ENCODE measurements at regions of chr17 and their contacts with region 1.

Region 1: GRCh38 chr17:35540589-35541404 is 3.3 kb upstream of the SLFN12L start:
- DNase-seq: no peak
- ATAC-seq: peak; percentile 71
- H3K4me3 ChIP-seq: peak overlapping the region; percentile 16 to 28
- H3K27ac ChIP-seq: peak overlapping the region; percentile 48; the same call in 1 of the 2 replicates
- H3K4me1 ChIP-seq: no peaks in the 10 kb centered on the region
- H3K27me3 ChIP-seq: no peaks in the 10 kb centered on the region
- CTCF ChIP-seq: no peak

Region 2: GRCh38 chr17:34207572-34207971 is 1333.2 kb before region 1 on chr17:
- CTCF ChIA-PET with region 1: interaction called, 10 read pairs
- POLR2A ChIA-PET with region 1: no interaction called
- in situ Hi-C with region 1: no loop called
- intact Hi-C with region 1: no loop called
- DNase-seq: no peak
- ATAC-seq: no peak
- H3K4me3 ChIP-seq: no peak overlapping the region
- H3K27ac ChIP-seq: peak overlapping the region; percentile 62
- H3K4me1 ChIP-seq: no peaks in the 10 kb centered on the region; the same call in 1 of the 2 replicates
- H3K27me3 ChIP-seq: no peaks in the 10 kb centered on the region
- CTCF ChIP-seq: no peak

Region 3: GRCh38 chr17:35189291-35189690 is 351.5 kb before region 1 on chr17:
- CTCF ChIA-PET with region 1: no interaction called
- POLR2A ChIA-PET with region 1: no interaction called
- in situ Hi-C with region 1: loop called (anchors 25 kb)
- intact Hi-C with region 1: no loop called
- DNase-seq: no peak
- ATAC-seq: no peak
- H3K4me3 ChIP-seq: no peak overlapping the region
- H3K27ac ChIP-seq: no peak overlapping the region
- H3K4me1 ChIP-seq: no peaks in the 10 kb centered on the region
- H3K27me3 ChIP-seq: no peaks in the 10 kb centered on the region
- CTCF ChIP-seq: no peak

Region 4: DNA sequence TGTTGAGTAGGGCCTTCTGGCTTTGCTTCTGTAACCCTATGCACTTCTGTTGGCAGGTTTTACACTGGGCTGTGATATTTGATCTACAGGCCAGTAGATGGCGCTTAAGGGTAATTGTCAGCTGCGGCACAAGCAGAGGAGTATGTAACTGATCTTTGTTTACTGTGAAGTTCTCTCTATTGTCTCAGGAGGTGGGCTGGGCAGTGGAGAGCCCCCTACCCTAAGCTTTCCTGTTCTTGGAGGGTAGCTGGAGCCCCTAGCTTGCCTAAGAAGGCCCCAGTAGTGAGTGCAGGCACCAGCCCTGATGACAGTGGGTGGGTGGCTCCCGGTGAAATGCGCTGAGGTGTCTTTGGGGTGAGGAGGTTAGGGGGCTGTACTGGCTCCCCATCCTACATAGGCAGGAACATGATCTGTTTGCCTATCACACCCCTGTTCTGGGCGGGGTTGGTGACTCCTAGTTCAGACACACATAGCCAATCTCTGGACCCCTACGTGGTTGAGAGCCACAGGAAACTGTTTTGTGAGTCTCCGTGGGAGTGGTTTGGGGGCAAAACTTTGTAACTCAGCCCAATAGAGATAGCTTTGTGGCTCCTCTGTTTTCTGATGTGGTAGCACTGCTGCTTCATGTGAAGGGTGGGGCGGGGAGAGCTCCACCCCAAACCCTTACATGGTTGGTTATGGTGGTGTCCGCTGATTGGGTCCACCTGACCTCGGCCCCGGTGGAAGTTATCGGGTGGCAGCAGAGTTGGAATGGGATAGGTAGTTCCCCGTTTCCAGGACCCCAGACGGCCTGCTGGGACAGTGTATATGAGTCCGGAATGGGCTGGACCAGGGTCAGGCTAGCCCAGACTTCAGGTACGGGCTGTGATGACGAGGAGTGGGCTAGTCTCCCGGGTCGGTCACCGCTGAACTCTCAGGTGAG is 227.7 kb before region 1 on chr17:
- CTCF ChIA-PET with region 1: interaction called, 12 read pairs
- POLR2A ChIA-PET with region 1: no interaction called
- in situ Hi-C with region 1: loop called (anchors 25 kb)
- intact Hi-C with region 1: no loop called
- DNase-seq: peak; percentile 32
- ATAC-seq: peak; percentile 98
- H3K4me3 ChIP-seq: no peak overlapping the region
- H3K27ac ChIP-seq: no peak overlapping the region
- H3K4me1 ChIP-seq: no peaks in the 10 kb centered on the region
- H3K27me3 ChIP-seq: no peaks in the 10 kb centered on the region; the same call in 1 of the 2 replicates
- CTCF ChIP-seq: peak; percentile 84

Region 5: DNA sequence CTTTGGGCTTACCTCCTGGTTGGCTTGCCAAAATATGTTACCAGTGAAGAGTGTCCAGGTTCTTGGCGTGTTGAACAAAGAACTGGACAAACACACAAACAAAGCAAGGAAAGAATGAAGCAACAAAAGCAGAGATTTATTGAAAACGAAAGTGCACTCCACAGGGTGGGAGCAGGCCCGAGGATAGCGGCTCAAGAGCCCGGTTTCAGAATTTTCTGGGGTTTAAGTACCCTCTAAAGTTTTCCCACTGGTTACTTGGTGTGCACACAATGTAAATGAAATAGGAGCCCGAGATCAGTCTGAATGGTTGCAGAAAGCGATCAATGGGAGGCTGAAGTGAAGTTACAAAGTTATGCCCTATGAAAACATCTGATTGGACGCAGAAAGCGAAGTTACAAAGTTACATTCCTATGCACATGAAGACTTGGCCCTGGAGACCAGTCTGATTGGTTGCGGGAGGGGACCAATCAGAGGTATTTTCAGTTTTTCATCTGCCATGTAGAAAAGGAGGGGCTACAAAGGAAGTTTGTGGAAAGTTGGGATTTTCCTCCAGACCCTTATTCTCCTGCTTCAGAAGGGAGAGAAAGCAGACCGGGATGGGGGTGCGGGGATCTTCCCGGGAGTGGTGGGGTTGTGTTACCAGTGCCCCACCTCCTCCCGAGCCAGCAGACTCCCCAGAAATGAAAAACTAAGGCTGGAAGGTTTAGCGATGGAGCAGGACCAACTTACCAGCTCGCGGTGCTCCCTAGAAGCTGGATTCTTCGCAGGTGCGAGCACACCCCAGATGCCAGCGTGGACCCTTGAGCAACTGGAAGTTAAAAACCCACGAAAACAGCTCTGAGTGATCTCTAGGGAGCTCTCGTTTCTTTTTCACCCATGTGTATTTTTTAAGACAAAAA is 108.4 kb before region 1 on chr17 and contains the start of gene SLFN12:
- CTCF ChIA-PET with region 1: no interaction called
- POLR2A ChIA-PET with region 1: no interaction called
- in situ Hi-C with region 1: no loop called
- intact Hi-C with region 1: loop called (anchors 10 kb)
- DNase-seq: peak; percentile 71
- ATAC-seq: peak; percentile 88
- H3K4me3 ChIP-seq: peak within 1 kb of the TSS; percentile 80 to 88
- H3K27ac ChIP-seq: peak within 1 kb of the TSS; percentile 98
- H3K4me1 ChIP-seq: peaks cover 40% of the 10 kb centered on the region
- H3K27me3 ChIP-seq: no peaks in the 10 kb centered on the region
- CTCF ChIP-seq: no peak
- total RNA-seq, gene SLFN12: 35.2 TPM

Measured in Panc1 (cell line).